A549 (cell line): ENCODE measurements at regions of chr7 and their contacts with region 1.

Region 1: DNA sequence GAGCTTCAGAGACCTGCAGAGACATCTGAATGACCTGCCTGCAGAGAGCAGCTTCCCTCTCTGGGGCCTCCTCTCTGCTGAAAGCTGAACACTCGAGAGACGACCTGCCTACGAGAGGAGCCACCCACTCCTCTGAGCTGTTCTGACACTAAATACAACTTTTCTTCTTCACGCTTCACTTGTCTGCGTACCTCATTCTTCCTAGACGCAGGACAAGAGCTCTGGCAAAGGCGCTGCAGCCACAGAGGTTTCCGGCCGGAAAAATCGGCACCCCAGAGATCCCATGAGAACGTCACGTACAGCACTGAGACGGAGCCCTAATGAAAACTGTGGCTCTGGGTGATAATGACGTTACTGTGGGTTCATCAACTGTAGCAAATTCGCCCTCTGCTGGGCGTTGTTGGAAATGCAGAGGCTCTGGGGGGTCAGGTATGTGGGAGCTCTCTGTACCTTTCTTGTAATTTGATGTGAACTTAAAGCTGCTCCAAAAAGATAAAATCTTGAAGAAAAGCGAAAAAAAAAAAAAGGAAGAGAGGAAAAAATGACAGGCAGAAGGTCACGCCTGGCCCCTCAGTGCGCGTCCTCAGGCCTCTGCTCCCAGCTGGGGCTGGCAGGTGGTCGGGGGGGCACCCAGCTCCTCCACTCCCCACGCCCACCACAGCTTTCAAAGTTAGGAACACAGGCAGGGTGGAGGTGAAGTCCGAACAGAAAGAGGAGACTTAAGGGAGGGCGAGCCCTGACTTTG is 120.7 kb downstream of the DYNC2I1 start:
- DNase-seq: peak; percentile 67 to 72
- ATAC-seq: peak; percentile 77 to 88
- H3K4me3 ChIP-seq: 0 out of 3 replicates have a peak overlapping the region, but pooled peaks have one; percentile 14
- H3K27ac ChIP-seq: peak overlapping the region; percentile 29 to 46; a peak in 5 of 6 replicates
- H3K4me1 ChIP-seq: no peaks in the 10 kb centered on the region
- CTCF ChIP-seq: peak; percentile 75
- EP300 ChIP-seq: no peak
- POLR2A ChIP-seq: no peak
- RAD21 ChIP-seq: peak; percentile 75 to 82

Region 2: GRCh38 chr7:158685693-158686092 is 291.3 kb before region 1 on chr7:
- CTCF ChIA-PET with region 1: interaction called, 11 read pairs
- POLR2A ChIA-PET with region 1: no interaction called
- DNase-seq: no peak
- ATAC-seq: no peak
- H3K4me3 ChIP-seq: no peak overlapping the region
- H3K27ac ChIP-seq: no peak overlapping the region
- H3K4me1 ChIP-seq: 0 out of 3 replicates have a peak, but pooled peaks cover 3% of the 10 kb centered on the region
- CTCF ChIP-seq: no peak
- EP300 ChIP-seq: no peak
- POLR2A ChIP-seq: no peak
- RAD21 ChIP-seq: no peak

Region 3: GRCh38 chr7:158824028-158824427 is 153.0 kb before region 1 on chr7:
- CTCF ChIA-PET with region 1: interaction called, 10 read pairs
- POLR2A ChIA-PET with region 1: no interaction called
- DNase-seq: no peak
- ATAC-seq: no peak
- H3K4me3 ChIP-seq: no peak overlapping the region
- H3K27ac ChIP-seq: peak overlapping the region; percentile 4 to 59; a peak in 3 of 6 replicates
- H3K4me1 ChIP-seq: peaks cover 62% of the 10 kb centered on the region
- CTCF ChIP-seq: no peak
- EP300 ChIP-seq: no peak
- POLR2A ChIP-seq: no peak
- RAD21 ChIP-seq: no peak

Region 4: DNA sequence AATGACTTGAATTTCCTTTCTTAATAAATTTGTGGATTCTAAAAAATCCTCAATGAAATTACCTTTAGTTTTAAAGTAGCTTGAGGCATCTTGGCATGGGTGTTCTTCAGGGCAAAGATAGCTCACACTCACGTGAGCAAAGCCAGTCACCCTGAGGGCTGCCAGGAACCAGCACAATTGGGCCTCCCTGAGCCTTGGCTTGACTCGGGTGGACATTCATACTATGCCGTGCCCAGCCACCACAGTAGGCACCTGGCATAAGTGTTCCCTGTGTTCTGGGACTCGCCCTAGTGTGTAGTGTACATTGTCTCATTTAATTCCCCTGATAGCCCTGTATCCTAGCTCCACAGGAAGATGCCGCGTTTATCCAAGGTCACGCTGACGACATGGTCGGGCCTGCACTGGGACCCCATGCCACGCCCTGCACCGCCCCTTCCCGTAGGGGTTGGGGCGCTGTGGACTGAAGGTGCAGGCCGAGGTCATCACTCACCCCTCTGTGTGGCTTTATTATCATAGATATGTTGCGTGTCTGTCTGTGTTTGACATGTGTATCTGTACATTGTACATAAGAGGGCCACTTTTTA is 53.0 kb before region 1 on chr7:
- CTCF ChIA-PET with region 1: interaction called, 10 read pairs
- POLR2A ChIA-PET with region 1: no interaction called
- DNase-seq: no peak
- ATAC-seq: no peak
- H3K4me3 ChIP-seq: no peak overlapping the region
- H3K27ac ChIP-seq: no peak overlapping the region
- H3K4me1 ChIP-seq: no peaks in the 10 kb centered on the region
- CTCF ChIP-seq: no peak
- EP300 ChIP-seq: no peak
- POLR2A ChIP-seq: no peak
- RAD21 ChIP-seq: no peak

Region 5: GRCh38 chr7:158963771-158964241 is 13.2 kb before region 1 on chr7:
- CTCF ChIA-PET with region 1: interaction called, 18 read pairs
- POLR2A ChIA-PET with region 1: no interaction called
- DNase-seq: no peak
- ATAC-seq: no peak
- H3K4me3 ChIP-seq: no peak overlapping the region
- H3K27ac ChIP-seq: no peak overlapping the region
- H3K4me1 ChIP-seq: no peaks in the 10 kb centered on the region
- CTCF ChIP-seq: no peak
- EP300 ChIP-seq: no peak
- POLR2A ChIP-seq: no peak
- RAD21 ChIP-seq: no peak

Region 6: GRCh38 chr7:159012353-159013069 is 35.5 kb after region 1 on chr7:
- CTCF ChIA-PET with region 1: interaction called, 19 read pairs
- POLR2A ChIA-PET with region 1: no interaction called
- DNase-seq: peak in 1 of 2 experiments; percentile 62
- ATAC-seq: peak in 1 of 2 experiments; percentile 12; a peak in 2 of 6 replicates
- H3K4me3 ChIP-seq: no peak overlapping the region
- H3K27ac ChIP-seq: peak overlapping the region; percentile 94 to 97
- H3K4me1 ChIP-seq: peaks cover 56% of the 10 kb centered on the region
- CTCF ChIP-seq: no peak
- EP300 ChIP-seq: peak in 1 of 2 experiments; percentile 34; a peak in 1 of 5 replicates
- POLR2A ChIP-seq: no peak
- RAD21 ChIP-seq: no peak

Region 7: DNA sequence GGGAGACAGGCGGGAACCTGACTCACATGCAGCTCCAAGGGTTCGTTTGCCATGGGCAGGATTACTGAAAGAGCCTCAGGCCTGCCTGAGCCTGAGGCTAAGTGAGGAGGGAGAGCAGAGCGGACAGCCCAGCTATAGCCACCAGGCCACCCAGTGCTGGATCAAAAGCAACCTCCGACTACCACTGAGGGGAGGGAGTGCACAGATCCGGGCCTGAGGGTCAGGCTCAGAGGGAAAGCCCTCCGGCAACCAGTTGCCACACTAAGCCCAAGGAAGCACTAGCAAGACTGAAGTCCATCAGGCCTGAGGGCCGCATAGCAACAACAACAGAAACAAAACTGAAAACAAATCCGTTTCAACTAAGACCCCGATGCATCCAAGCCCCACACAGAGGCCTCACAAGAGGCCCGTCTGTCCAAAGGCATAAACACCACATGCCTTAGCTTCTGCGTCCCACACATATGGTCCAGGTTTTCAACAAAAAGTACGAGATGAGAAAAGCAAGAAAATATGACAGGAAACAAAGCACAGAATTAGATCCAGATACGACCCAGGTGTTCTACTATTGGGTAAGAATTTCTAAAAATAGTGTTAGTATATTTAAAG is 260.1 kb after region 1 on chr7:
- CTCF ChIA-PET with region 1: no interaction called
- POLR2A ChIA-PET with region 1: no interaction called
- DNase-seq: no peak
- ATAC-seq: no peak
- H3K4me3 ChIP-seq: no peak overlapping the region
- H3K27ac ChIP-seq: no peak overlapping the region
- H3K4me1 ChIP-seq: no peaks in the 10 kb centered on the region
- CTCF ChIP-seq: no peak
- EP300 ChIP-seq: no peak
- POLR2A ChIP-seq: no peak
- RAD21 ChIP-seq: no peak